MCF 10A (cell line): ENCODE measurements at regions of chr16 and their contacts with region 1.

Region 1: GRCh38 chr16:27367461-27368357 is 34.3 kb upstream of the IL21R start:
- DNase-seq: peak; percentile 78
- H3K4me3 Mint-ChIP-seq: peak overlapping the region; percentile 39
- H3K27ac Mint-ChIP-seq: no peak overlapping the region
- H3K4me1 Mint-ChIP-seq: peaks cover 6% of the 10 kb centered on the region
- H3K27me3 Mint-ChIP-seq: no peaks in the 10 kb centered on the region
- CTCF ChIP-seq: peak; percentile 91

Region 2: GRCh38 chr16:27145630-27146029 is 222.1 kb before region 1 on chr16:
- CTCF ChIA-PET with region 1: interaction called, 14 read pairs
- POLR2A ChIA-PET with region 1: no interaction called
- intact Hi-C with region 1: no loop called
- DNase-seq: no peak
- H3K4me3 Mint-ChIP-seq: no peak overlapping the region
- H3K27ac Mint-ChIP-seq: no peak overlapping the region
- H3K4me1 Mint-ChIP-seq: no peaks in the 10 kb centered on the region
- H3K27me3 Mint-ChIP-seq: peaks cover 11% of the 10 kb centered on the region
- CTCF ChIP-seq: no peak

Region 3: GRCh38 chr16:27222249-27223225 is 145.2 kb before region 1 on chr16:
- CTCF ChIA-PET with region 1: interaction called, 41 read pairs
- POLR2A ChIA-PET with region 1: no interaction called
- intact Hi-C with region 1: no loop called
- DNase-seq: no peak
- H3K4me3 Mint-ChIP-seq: no peak overlapping the region
- H3K27ac Mint-ChIP-seq: no peak overlapping the region
- H3K4me1 Mint-ChIP-seq: no peaks in the 10 kb centered on the region
- H3K27me3 Mint-ChIP-seq: no peaks in the 10 kb centered on the region
- CTCF ChIP-seq: no peak

Region 4: GRCh38 chr16:27253526-27253930 is 114.2 kb before region 1 on chr16:
- CTCF ChIA-PET with region 1: interaction called, 11 read pairs
- POLR2A ChIA-PET with region 1: interaction called, 7 read pairs
- intact Hi-C with region 1: no loop called
- DNase-seq: peak; percentile 69
- H3K4me3 Mint-ChIP-seq: no peak overlapping the region
- H3K27ac Mint-ChIP-seq: no peak overlapping the region
- H3K4me1 Mint-ChIP-seq: peaks cover 23% of the 10 kb centered on the region
- H3K27me3 Mint-ChIP-seq: no peaks in the 10 kb centered on the region
- CTCF ChIP-seq: no peak

Region 5: GRCh38 chr16:27313422-27314160 is 54.1 kb before region 1 on chr16 and contains the start of gene IL4R:
- CTCF ChIA-PET with region 1: interaction called, 36 read pairs
- POLR2A ChIA-PET with region 1: interaction called, 17 read pairs
- intact Hi-C with region 1: no loop called
- DNase-seq: peak; percentile 82
- H3K4me3 Mint-ChIP-seq: peak within 1 kb of the TSS; percentile 81
- H3K27ac Mint-ChIP-seq: peak within 1 kb of the TSS; percentile 51
- H3K4me1 Mint-ChIP-seq: peaks cover 32% of the 10 kb centered on the region
- H3K27me3 Mint-ChIP-seq: no peaks in the 10 kb centered on the region
- CTCF ChIP-seq: no peak
- total RNA-seq, gene IL4R: 50.4 and 51.9 TPM in 2 replicates

Region 6: GRCh38 chr16:27387724-27388123 is 20.0 kb after region 1 on chr16:
- CTCF ChIA-PET with region 1: interaction called, 19 read pairs
- POLR2A ChIA-PET with region 1: no interaction called
- intact Hi-C with region 1: no loop called
- DNase-seq: no peak
- H3K4me3 Mint-ChIP-seq: no peak overlapping the region
- H3K27ac Mint-ChIP-seq: no peak overlapping the region
- H3K4me1 Mint-ChIP-seq: no peaks in the 10 kb centered on the region
- H3K27me3 Mint-ChIP-seq: peaks cover 42% of the 10 kb centered on the region
- CTCF ChIP-seq: no peak

Region 7: GRCh38 chr16:27549859-27550581 is 182.3 kb after region 1 on chr16 and contains the starts of genes GTF3C1 and KATNIP:
- CTCF ChIA-PET with region 1: no interaction called
- POLR2A ChIA-PET with region 1: no interaction called
- intact Hi-C with region 1: no loop called
- DNase-seq: peak; percentile 99
- H3K4me3 Mint-ChIP-seq: peak within 1 kb of the TSS; percentile 100
- H3K27ac Mint-ChIP-seq: peak within 1 kb of the TSS; percentile 100
- H3K4me1 Mint-ChIP-seq: peaks cover 39% of the 10 kb centered on the region
- H3K27me3 Mint-ChIP-seq: no peaks in the 10 kb centered on the region
- CTCF ChIP-seq: no peak
- total RNA-seq, gene GTF3C1: 38.1 and 52.3 TPM in 2 replicates
- total RNA-seq, gene KATNIP: 21.3 and 36.5 TPM in 2 replicates